Posterior vena cava (tissue), 2 donors: ENCODE measurements at regions of chr11 and their contacts with region 1.

Region 1: DNA sequence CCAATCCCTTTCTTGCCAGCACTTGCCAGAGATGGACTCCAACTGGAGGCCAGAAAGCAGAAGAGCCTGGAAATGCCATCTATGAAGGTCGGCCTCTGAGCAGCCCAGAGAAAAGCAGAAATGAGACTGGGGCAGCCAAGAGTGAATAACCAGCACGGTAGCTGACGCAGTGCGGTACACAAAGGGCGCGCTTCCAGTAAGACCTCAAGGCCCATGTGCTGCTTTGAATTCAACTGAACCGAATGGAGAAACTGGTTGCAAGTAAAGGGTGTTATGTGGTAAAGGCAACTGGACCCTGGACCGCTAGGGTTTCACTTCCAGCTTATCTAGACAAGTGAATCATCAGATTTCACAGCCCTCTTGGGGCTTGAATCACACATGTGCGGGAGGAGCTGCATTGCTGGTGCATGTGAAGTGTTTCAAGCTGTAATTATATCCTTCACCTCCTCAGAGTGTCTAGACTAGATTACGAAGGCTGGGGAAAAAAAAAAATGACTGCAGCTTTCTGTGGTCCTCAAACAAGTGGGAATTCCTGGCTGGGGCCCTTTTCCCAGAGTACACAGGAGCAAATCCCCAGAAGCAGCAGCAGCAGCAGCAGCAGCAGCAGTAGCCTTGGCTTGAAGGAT is 128.9 kb downstream of the CCDC34 start:
- DNase-seq: peak; percentile 89

Region 2: DNA sequence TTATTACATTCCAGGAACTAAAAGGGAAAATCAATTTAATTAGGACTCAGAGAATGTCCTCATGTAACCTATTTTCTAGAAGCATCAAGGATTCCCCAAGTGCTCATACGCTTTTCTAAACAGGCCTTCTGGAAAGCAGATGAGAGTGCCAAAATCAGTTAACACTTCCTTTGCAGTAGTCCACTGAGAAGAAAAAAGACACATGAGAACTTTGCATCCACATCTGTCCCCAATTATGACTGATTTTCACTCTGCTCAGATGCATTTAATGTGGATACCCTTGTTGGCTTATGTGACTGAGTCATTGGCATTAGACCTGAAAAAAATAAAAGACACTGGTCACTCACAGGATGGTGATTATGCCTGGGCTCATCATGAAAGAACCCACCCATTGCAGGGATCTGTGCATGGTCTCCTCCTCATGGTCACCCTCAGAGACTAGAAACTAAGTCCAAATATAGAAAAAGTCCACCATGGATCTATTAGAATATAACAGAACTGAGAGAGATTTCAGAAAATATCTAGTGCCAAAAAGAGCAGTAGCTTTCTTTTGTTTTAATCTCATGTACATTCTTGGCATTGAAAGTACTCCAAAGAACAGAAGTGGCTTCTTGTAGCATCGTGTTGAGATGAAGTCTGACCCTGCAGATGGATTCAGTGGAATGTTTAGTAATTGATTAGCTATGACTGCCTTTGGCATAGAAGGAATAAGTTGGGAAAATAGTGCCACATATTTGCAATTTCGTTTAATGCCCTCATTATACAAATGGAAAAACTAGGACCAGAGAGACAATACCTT is 289.1 kb before region 1 on chr11:
- intact Hi-C with region 1: no loop called
- DNase-seq: no peak

Region 3: GRCh38 chr11:27193434-27194225 is 40.5 kb before region 1 on chr11:
- intact Hi-C with region 1: loop called in 1 of 2 experiments (anchors 2 kb)
- DNase-seq: no peak